ENCODE measurements at regions of chr3 and their contacts with region 1.

Region 1: GRCh38 chr3:175526609-175527280 is 667.6 kb downstream of the NAALADL2 start:
- DNase-seq: no peak
- ATAC-seq: peak; percentile 73
- H3K4me3 ChIP-seq: no peak overlapping the region
- H3K27ac ChIP-seq: no peak overlapping the region
- H3K4me1 ChIP-seq: no peaks in the 10 kb centered on the region
- H3K27me3 ChIP-seq: no peaks in the 10 kb centered on the region; a peak in 1 of 4 replicates
- CTCF ChIP-seq: no peak
- EP300 ChIP-seq: no peak
- POLR2A ChIP-seq: no peak
- RAD21 ChIP-seq: no peak

Region 2: DNA sequence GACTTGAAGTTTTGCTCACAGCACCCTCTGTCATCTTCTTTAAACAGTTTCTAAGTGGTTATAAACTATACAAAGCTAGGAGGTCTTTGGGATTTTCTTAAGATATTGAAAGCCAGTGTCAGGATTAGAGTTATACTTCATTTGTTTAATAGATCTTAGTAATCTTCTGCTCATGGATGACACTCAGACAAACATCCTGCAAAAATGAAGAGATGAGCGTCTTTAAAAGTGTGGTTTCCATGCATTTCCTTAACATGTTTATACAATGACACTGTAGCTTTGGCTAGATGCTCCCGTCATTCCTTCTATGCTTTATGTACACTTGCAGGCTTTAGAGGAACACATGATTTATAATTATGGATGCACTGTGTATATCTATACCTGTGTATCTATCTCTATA is 485.4 kb before region 1 on chr3:
- CTCF ChIA-PET with region 1: no interaction called
- POLR2A ChIA-PET with region 1: no interaction called
- RAD21 ChIA-PET with region 1: no interaction called
- SMC1A ChIA-PET with region 1: no interaction called
- in situ Hi-C with region 1: no loop called
- intact Hi-C with region 1: no loop called
- DNase-seq: no peak
- ATAC-seq: no peak
- H3K4me3 ChIP-seq: no peak overlapping the region
- H3K27ac ChIP-seq: no peak overlapping the region
- H3K4me1 ChIP-seq: no peaks in the 10 kb centered on the region
- H3K27me3 ChIP-seq: no peaks in the 10 kb centered on the region
- CTCF ChIP-seq: no peak
- EP300 ChIP-seq: no peak
- POLR2A ChIP-seq: no peak
- RAD21 ChIP-seq: no peak

Region 3: GRCh38 chr3:175187586-175187985 is 339.2 kb before region 1 on chr3:
- CTCF ChIA-PET with region 1: no interaction called
- POLR2A ChIA-PET with region 1: no interaction called
- RAD21 ChIA-PET with region 1: no interaction called
- SMC1A ChIA-PET with region 1: no interaction called
- in situ Hi-C with region 1: no loop called
- intact Hi-C with region 1: no loop called
- DNase-seq: no peak
- ATAC-seq: no peak
- H3K4me3 ChIP-seq: no peak overlapping the region
- H3K27ac ChIP-seq: no peak overlapping the region
- H3K4me1 ChIP-seq: no peaks in the 10 kb centered on the region
- H3K27me3 ChIP-seq: no peaks in the 10 kb centered on the region
- CTCF ChIP-seq: no peak
- EP300 ChIP-seq: no peak
- POLR2A ChIP-seq: no peak
- RAD21 ChIP-seq: no peak

Region 4: DNA sequence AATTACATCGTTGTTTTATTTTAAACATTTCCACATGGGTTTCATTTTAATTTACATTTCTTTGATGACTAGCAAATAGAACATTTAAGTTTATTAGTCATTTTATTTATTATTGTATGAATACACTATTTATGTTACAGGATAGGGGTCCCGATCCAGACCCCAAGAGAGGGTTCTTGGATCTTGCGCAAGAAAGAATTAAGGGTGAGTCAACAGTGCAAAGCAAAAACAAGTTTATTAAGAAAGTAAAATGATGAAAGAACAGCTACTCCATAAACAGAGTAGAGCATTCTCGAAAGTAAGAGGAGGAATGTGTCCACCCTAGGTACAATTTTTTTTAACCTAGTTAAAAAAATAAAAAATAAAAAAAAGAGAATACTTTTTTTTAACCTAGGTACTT is 128.0 kb before region 1 on chr3:
- CTCF ChIA-PET with region 1: no interaction called
- POLR2A ChIA-PET with region 1: no interaction called
- RAD21 ChIA-PET with region 1: no interaction called
- SMC1A ChIA-PET with region 1: no interaction called
- in situ Hi-C with region 1: no loop called
- intact Hi-C with region 1: no loop called
- DNase-seq: no peak
- ATAC-seq: no peak
- H3K4me3 ChIP-seq: no peak overlapping the region
- H3K27ac ChIP-seq: no peak overlapping the region
- H3K4me1 ChIP-seq: no peaks in the 10 kb centered on the region
- H3K27me3 ChIP-seq: no peaks in the 10 kb centered on the region
- CTCF ChIP-seq: no peak
- EP300 ChIP-seq: no peak
- POLR2A ChIP-seq: no peak
- RAD21 ChIP-seq: no peak

Region 5: GRCh38 chr3:175512700-175513099 is 14.0 kb before region 1 on chr3:
- CTCF ChIA-PET with region 1: interaction called, 3 read pairs
- POLR2A ChIA-PET with region 1: interaction called, 3 read pairs
- RAD21 ChIA-PET with region 1: no interaction called
- SMC1A ChIA-PET with region 1: interaction called, 11 read pairs
- in situ Hi-C with region 1: no loop called
- intact Hi-C with region 1: no loop called
- DNase-seq: no peak
- ATAC-seq: no peak
- H3K4me3 ChIP-seq: no peak overlapping the region
- H3K27ac ChIP-seq: no peak overlapping the region
- H3K4me1 ChIP-seq: no peaks in the 10 kb centered on the region
- H3K27me3 ChIP-seq: no peaks in the 10 kb centered on the region
- CTCF ChIP-seq: no peak
- EP300 ChIP-seq: no peak
- POLR2A ChIP-seq: no peak
- RAD21 ChIP-seq: no peak

Measured in GM12878 (cell line).